A549 (cell line): ENCODE measurements at regions of chr7 and their contacts with region 1.

Region 1: GRCh38 chr7:129298268-129298893 is 73.6 kb downstream of the AHCYL2 start:
- DNase-seq: peak; percentile 49 to 59
- ATAC-seq: peak; percentile 54 to 59; a peak in 3 of 6 replicates
- H3K4me3 ChIP-seq: no peak overlapping the region
- H3K27ac ChIP-seq: no peak overlapping the region
- H3K4me1 ChIP-seq: no peaks in the 10 kb centered on the region
- CTCF ChIP-seq: peak; percentile 91
- EP300 ChIP-seq: no peak
- POLR2A ChIP-seq: no peak
- RAD21 ChIP-seq: peak; percentile 74 to 78

Region 2: GRCh38 chr7:129210256-129210988 is 88.0 kb before region 1 on chr7:
- CTCF ChIA-PET with region 1: interaction called, 29 read pairs
- POLR2A ChIA-PET with region 1: no interaction called
- DNase-seq: peak; percentile 60 to 84
- ATAC-seq: peak; percentile 88 to 95
- H3K4me3 ChIP-seq: no peak overlapping the region
- H3K27ac ChIP-seq: no peak overlapping the region
- H3K4me1 ChIP-seq: no peaks in the 10 kb centered on the region
- CTCF ChIP-seq: peak; percentile 81
- EP300 ChIP-seq: no peak
- POLR2A ChIP-seq: no peak
- RAD21 ChIP-seq: peak; percentile 85 to 87

Region 3: DNA sequence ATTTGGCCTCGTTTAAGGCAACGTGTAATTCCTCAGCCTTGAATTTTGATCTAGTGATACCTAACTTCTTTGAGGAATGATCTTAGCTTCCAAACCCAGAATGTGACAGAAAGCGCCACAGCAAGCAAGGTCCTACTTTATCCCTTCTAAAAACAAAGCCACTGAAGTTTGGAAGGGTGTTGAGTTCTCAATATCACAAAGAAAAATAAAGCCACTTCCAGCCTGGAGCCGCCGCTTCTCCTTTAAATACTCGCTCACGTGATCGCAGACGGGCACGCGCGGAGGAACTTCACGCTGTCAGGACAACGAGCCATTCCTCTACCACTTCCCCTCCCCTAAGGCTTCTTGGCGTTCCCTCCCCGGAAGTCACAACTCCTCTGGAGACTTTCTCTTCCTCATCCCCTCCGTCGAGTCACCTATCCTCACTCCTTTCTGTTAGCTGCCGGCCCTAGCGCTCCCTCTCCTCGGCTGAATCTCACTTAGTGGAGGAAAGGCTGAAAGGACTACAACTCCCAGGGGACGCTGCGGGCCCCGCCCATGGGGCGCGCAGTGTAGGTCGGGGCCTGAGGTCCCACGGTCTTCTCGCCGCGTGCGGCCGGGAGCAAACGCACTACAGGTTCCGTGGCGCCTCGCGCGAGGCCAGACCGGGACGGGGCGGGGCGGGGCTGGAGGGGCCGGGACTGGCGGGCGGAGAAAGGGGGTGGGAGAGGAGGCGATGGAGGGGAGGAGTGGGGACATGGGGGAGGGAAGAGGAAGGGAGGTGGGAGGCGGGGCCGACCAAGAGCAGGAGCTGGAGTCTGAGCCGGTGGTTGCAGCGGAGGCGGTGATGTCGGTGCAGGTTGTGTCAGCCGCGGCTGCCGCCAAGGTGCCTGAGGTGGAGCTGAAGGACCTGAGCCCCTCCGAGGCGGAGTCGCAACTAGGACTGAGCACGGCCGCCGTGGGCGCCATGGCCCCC is 73.9 kb before region 1 on chr7 and contains the start of gene AHCYL2:
- CTCF ChIA-PET with region 1: interaction called, 203 read pairs
- POLR2A ChIA-PET with region 1: no interaction called
- DNase-seq: peak; percentile 92 to 98
- ATAC-seq: peak; percentile 95 to 96
- H3K4me3 ChIP-seq: peak within 1 kb of the TSS; percentile 97
- H3K27ac ChIP-seq: peak within 1 kb of the TSS; percentile 77 to 94
- H3K4me1 ChIP-seq: peaks cover 20% of the 10 kb centered on the region; the same call in 2 of the 3 replicates
- CTCF ChIP-seq: no peak
- EP300 ChIP-seq: no peak
- POLR2A ChIP-seq: peak; percentile 76
- RAD21 ChIP-seq: no peak
- polyA plus RNA-seq, gene AHCYL2: 25.7 and 25.9 TPM in 2 replicates

Region 4: DNA sequence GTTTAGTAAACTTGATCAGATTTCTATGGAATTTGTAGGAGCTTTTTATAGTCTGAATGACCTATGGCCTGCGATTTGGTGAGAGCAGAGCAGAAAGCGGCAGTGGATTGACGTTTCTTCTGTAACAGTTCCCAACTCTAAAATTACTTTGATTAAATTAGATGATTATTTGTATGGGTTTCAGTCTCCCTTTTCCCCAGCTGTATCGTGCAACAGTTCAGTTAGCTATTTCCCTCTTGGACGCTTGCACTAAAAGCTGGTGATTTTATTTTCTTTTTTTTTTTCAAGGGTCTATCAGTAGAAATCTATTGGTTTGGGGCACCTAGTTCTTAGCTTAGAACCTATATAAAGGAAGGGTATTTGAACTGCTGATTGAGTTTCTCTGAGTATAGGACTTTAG is 66.7 kb before region 1 on chr7:
- CTCF ChIA-PET with region 1: interaction called, 13 read pairs
- POLR2A ChIA-PET with region 1: no interaction called
- DNase-seq: no peak
- ATAC-seq: no peak
- H3K4me3 ChIP-seq: no peak overlapping the region
- H3K27ac ChIP-seq: no peak overlapping the region
- H3K4me1 ChIP-seq: peaks cover 7% of the 10 kb centered on the region; the same call in 1 of the 3 replicates
- CTCF ChIP-seq: no peak
- EP300 ChIP-seq: no peak
- POLR2A ChIP-seq: no peak
- RAD21 ChIP-seq: no peak

Region 5: GRCh38 chr7:129285111-129285510 is 13.3 kb before region 1 on chr7:
- CTCF ChIA-PET with region 1: interaction called, 11 read pairs
- POLR2A ChIA-PET with region 1: no interaction called
- DNase-seq: no peak
- ATAC-seq: no peak
- H3K4me3 ChIP-seq: no peak overlapping the region
- H3K27ac ChIP-seq: no peak overlapping the region
- H3K4me1 ChIP-seq: no peaks in the 10 kb centered on the region
- CTCF ChIP-seq: no peak
- EP300 ChIP-seq: no peak
- POLR2A ChIP-seq: no peak
- RAD21 ChIP-seq: no peak